Left cardiac atrium (tissue), 4 donors: ENCODE measurements at regions of chr5 and their contacts with region 1.

Region 1: DNA sequence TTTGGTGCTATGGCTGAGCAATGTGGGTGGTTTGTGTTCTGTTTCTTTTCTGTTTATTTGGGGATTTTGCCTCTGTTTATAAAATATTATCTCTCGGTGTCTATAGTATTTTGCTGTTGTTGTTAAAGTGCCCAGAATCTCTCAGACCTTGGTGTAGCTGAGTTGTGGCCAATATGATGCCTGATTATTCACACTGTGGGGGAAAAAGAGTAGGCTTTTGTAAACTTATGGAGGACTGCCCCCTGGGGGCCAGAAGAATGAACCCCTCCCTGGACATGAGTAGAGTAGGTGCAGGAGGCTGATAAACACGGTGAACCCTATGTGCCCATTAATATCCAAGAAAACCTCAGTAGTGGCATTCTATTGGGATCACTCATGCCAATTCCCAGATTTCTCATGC is 49.0 kb upstream of the DPYSL3 start:
- DNase-seq: peak; percentile 68
- ATAC-seq: peak; percentile 75 to 91

Region 2: GRCh38 chr5:147223948-147224791 is 334.7 kb before region 1 on chr5:
- intact Hi-C with region 1: loop called in 1 of 2 experiments (anchors 5 kb)
- DNase-seq: peak; percentile 29
- ATAC-seq: peak; percentile 78 to 81

Region 3: DNA sequence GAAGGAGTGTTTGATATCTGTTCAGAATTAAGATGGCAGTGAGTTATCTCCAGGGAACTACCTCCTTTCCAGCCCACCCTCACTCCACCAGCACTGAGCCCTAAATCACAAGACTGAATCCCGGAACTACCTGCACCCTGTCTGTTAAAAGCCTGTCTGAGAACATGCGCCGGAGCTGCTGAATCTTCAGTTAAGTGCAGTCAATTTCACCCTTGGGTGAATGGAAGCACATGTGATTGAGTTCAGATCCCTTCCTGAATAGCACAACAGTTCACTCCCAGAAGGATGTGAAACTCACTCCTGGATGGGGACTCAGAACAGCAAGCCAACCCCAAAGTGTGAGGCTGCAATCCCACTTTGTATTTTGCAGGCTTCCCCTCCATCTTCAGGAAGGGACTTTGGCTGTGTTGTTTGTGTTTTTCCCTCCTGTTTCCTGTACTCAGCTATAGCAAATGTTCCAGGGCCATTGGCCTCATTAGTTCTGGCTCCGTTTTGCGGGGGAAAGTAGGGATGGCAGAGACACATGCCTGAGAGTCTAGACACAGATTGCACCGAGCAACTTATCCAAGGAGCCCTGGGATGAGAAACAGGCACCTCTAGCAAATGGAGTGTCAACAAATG is 92.4 kb before region 1 on chr5:
- intact Hi-C with region 1: loop called (anchors 2 to 5 kb)
- DNase-seq: no peak
- ATAC-seq: peak; percentile 46 to 66

Region 4: GRCh38 chr5:147509710-147510651 is 48.8 kb before region 1 on chr5 and contains the start of gene DPYSL3:
- intact Hi-C with region 1: loop called in 1 of 2 experiments (anchors 5 kb)
- DNase-seq: peak; percentile 83
- ATAC-seq: peak; percentile 95 to 97
- total RNA-seq, gene DPYSL3: 42.4 to 55.7 TPM